Caco-2 (cell line): ENCODE measurements at regions of chr3 and their contacts with region 1.

Region 1: GRCh38 chr3:197029511-197030167 is at the start of gene MELTF:
- DNase-seq: peak; percentile 75 to 89
- H3K4me3 ChIP-seq: peak within 1 kb of the TSS; percentile 87
- H3K4me3 Mint-ChIP-seq: peak within 1 kb of the TSS; percentile 81
- H3K27ac Mint-ChIP-seq: no peak within 1 kb of the TSS
- H3K4me1 ChIP-seq: peaks cover 23% of the 10 kb centered on the region
- H3K4me1 Mint-ChIP-seq: peaks cover 13% of the 10 kb centered on the region
- H3K27me3 ChIP-seq: no peaks in the 10 kb centered on the region
- H3K27me3 Mint-ChIP-seq: no peaks in the 10 kb centered on the region
- CTCF ChIP-seq: peak; percentile 56 to 90
- total RNA-seq, gene MELTF: 29.3 and 30.6 TPM in 2 replicates

Region 2: DNA sequence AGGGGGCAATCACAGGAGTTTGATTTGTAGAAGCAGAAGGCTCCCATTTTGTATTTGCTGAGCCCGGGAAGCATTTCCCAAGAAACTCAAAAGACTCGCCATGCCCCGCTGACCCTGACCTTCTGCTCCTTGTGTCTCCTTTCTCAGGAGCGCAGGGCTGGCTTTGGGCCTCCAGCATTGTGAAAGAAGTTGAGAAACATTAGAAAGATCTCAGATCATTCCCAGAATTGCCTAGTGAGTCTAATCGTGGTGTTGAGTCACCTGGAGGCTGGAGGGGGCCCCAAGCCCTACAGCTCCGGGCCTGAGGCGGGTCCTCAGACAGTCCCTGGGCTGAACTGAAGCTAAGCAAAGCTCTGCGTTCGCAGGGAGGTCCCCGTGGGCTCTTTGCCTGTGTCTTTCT is 50.1 kb before region 1 on chr3:
- CTCF ChIA-PET with region 1: interaction called, 4 read pairs
- POLR2A ChIA-PET with region 1: no interaction called
- intact Hi-C with region 1: loop called (anchors 1 kb)
- DNase-seq: peak; percentile 32 to 44
- H3K4me3 ChIP-seq: no peak overlapping the region
- H3K4me3 Mint-ChIP-seq: no peak overlapping the region
- H3K27ac Mint-ChIP-seq: no peak overlapping the region
- H3K4me1 ChIP-seq: peaks cover 5% of the 10 kb centered on the region; the same call in 1 of the 2 replicates
- H3K4me1 Mint-ChIP-seq: no peaks in the 10 kb centered on the region
- H3K27me3 ChIP-seq: no peaks in the 10 kb centered on the region
- H3K27me3 Mint-ChIP-seq: no peaks in the 10 kb centered on the region
- CTCF ChIP-seq: no peak